GM23248 (cell line): ENCODE measurements at regions of chr17 and their contacts with region 1.

Region 1: GRCh38 chr17:65294179-65294720 is 157.1 kb downstream of the RGS9 start:
- DNase-seq: peak; percentile 83
- H3K4me3 ChIP-seq: no peak overlapping the region
- H3K27ac ChIP-seq: no peak overlapping the region
- H3K4me1 ChIP-seq: peaks cover 13% of the 10 kb centered on the region
- H3K27me3 ChIP-seq: no peaks in the 10 kb centered on the region

Region 2: GRCh38 chr17:65231662-65232335 is 62.5 kb before region 1 on chr17:
- in situ Hi-C with region 1: no loop called
- DNase-seq: peak; percentile 95
- H3K4me3 ChIP-seq: no peak overlapping the region
- H3K27ac ChIP-seq: peak overlapping the region; percentile 31
- H3K4me1 ChIP-seq: no peaks in the 10 kb centered on the region; the same call in none of the 2 replicates
- H3K27me3 ChIP-seq: no peaks in the 10 kb centered on the region; the same call in 1 of the 2 replicates

Region 3: GRCh38 chr17:65345261-65346005 is 51.2 kb after region 1 on chr17:
- in situ Hi-C with region 1: no loop called
- DNase-seq: no peak
- H3K4me3 ChIP-seq: no peak overlapping the region
- H3K27ac ChIP-seq: no peak overlapping the region
- H3K4me1 ChIP-seq: no peaks in the 10 kb centered on the region
- H3K27me3 ChIP-seq: no peaks in the 10 kb centered on the region

Region 4: DNA sequence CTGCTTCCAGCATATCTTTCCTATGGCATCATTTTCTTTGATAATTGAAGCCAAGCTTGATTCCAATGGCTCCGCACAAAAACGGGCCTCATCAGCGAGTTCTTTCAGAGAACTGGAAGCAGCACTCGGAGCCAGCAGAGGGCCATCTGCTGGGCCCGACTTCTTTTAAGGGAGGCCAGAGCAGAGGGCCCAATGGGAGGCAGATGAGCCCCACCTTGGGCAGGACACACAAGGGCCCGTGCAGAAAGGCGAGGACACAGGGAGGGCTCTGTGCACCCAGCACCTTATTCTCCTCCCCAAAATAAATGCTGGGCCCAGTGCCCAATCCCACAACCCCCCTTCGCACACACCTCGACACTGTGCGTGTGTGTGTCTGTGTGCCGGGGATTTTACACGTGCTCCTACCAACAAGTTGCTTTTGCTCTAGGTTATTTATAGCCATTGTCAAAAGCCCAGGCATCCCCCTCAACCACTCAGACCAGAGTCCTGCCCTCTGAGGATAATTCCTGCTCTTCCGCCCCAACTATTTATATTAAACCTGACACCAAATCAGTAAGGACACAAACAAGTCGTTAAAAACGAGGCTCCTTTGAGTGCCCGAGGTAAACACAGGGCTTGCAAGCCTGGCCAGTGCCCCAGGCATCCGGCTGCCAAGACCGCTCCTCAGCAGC is 260.4 kb after region 1 on chr17:
- in situ Hi-C with region 1: loop called (anchors 5 kb)
- DNase-seq: peak; percentile 58
- H3K4me3 ChIP-seq: peak overlapping the region; percentile 38; the same call in 1 of the 2 replicates
- H3K27ac ChIP-seq: peak overlapping the region; percentile 89; the same call in 1 of the 2 replicates
- H3K4me1 ChIP-seq: peaks cover 19% of the 10 kb centered on the region
- H3K27me3 ChIP-seq: no peaks in the 10 kb centered on the region

Region 5: GRCh38 chr17:65794572-65794971 is 500.3 kb after region 1 on chr17:
- in situ Hi-C with region 1: loop called (anchors 25 kb)
- DNase-seq: peak; percentile 41
- H3K4me3 ChIP-seq: no peak overlapping the region
- H3K27ac ChIP-seq: no peak overlapping the region
- H3K4me1 ChIP-seq: no peaks in the 10 kb centered on the region
- H3K27me3 ChIP-seq: no peaks in the 10 kb centered on the region

Region 6: DNA sequence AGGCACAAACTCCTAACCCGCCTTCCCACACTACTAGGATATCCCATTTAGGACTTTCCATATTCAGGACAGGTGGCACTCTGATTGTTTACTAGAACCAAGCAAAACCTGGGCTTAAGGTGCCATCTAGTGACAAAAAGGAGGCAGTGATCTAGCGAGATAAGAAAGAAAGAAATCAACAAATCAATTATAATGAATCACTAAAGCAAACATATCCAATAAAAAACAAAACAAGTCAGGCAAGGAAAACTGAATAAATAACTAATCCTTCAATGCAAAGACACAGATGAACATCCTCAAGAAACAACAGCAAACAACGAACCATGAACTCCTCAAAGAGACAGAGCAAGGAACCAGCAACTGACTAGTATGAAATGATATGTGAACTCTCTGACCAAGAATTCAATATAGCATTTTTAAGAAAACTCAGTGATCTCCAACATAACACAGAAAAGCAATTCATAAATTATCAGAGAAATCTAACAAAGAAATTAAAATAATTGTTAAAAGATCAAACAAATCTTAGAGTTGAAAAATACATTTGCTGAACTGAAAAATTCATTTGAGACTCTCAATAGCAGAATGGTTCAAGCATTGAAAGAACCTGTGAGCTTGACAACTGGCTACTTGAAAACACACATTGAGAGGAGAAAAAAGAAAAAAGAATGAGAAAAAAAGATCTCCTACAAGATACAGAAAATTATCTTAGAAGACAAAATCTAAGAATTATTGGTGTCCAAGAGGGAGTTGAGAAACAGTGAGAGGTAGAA is 694.0 kb after region 1 on chr17:
- in situ Hi-C with region 1: loop called (anchors 25 kb)
- DNase-seq: peak; percentile 45
- H3K4me3 ChIP-seq: no peak overlapping the region
- H3K27ac ChIP-seq: no peak overlapping the region
- H3K4me1 ChIP-seq: peaks cover 13% of the 10 kb centered on the region
- H3K27me3 ChIP-seq: no peaks in the 10 kb centered on the region

Region 7: DNA sequence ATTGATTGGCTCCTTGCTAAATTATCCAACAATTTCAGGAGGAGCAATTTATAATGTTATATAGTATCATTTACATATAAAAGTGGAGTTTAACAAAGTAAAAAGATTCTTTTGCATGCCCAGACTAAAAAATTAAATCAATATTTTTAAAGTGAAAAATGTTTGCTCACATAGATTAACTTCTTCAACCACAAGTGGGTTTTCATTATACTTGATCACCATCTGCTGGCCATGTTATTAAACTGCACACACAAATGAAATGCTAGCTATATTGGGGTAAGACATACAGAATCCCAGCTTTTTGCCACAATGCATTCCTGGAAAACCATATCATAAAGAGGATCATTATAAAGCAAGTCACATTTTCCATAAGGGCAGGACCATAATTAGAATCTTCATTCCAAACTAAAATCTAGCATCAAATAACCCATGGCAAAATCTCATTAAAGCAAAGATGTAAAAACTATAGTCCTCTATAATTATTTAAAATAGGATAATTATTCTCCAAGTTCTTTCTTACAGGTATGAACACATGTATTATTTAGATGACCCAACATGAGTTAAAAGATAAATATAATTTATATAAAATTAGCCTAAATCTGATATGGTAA is 871.4 kb after region 1 on chr17:
- in situ Hi-C with region 1: loop called (anchors 10 kb)
- DNase-seq: peak; percentile 66
- H3K4me3 ChIP-seq: no peak overlapping the region
- H3K27ac ChIP-seq: no peak overlapping the region
- H3K4me1 ChIP-seq: no peaks in the 10 kb centered on the region
- H3K27me3 ChIP-seq: no peaks in the 10 kb centered on the region